Sciatic nerve (tissue), 2 donors: ENCODE measurements at regions of chr13 and their contacts with region 1.

Region 1: DNA sequence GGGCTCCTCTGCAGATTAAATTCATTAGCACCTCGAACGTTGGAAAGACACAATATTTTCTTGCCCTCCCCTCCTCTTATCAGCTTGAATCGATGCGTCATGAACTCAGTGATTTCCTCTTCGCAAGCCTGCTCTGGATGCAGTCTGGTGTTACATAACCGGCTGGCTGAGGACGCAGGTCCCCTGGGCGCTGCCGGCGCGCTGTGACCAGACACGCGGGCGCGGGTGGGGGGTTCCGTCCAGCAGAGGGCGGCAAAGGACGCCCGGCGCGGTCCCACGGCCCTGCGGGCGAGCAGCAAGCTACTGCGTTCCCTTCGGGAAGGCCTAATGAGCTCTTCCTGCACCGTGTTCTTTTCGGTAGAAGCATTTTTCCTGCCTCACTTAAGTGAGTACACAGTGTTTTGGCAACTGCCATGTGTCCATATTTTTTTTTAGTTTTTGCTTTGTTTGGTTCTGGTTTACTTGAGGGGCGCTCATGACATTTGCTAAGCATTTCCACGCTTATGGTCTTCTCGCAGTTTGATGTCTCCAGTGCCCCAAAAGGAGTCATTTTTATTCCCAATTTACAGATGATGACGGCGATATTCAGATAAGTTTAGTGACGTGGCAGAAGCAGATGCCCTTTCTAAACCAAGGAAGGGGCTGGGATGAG is 112.2 kb upstream of the MBNL2 start:
- DNase-seq: peak; percentile 95
- ATAC-seq: peak; percentile 96

Region 2: DNA sequence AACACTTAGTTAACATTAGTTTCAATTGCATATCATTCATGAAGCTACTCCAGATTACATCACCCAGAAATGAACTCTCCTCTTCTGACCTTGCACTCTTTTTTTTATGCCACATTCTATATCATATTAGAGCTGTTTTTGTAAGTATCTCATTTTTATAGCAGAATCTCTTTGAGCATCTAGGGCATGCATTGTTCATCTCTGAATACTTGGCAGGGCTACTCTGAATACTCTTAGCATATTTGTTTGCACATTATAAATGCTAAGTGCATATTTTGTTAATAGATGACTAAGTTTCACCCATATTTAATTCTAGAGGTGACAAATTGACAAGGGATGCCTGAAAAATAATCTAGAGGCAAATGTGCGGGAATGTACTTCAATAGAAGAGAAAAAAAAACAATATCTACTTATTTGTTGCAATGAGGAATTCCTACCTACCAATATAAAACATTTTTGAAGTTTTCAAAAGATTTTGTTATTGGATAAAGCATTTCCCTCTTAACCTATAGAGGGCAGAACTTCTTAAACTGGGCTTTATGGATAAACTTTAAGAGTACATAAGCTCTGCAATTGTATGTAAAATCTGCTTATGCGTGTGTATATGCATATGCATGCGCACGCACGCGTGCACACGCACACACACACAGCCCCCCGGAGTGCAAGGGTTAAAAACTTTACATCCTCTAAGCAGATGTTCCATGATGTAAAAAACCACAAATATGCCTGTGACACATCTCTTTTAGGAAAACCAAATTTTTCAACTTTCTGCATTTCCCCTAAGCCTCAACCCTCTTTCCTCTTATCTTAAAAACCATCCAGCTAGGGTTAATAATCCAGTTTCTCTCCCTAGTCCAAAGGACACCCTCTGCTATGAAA is 42.7 kb before region 1 on chr13:
- intact Hi-C with region 1: no loop called
- DNase-seq: no peak
- ATAC-seq: no peak

Region 3: DNA sequence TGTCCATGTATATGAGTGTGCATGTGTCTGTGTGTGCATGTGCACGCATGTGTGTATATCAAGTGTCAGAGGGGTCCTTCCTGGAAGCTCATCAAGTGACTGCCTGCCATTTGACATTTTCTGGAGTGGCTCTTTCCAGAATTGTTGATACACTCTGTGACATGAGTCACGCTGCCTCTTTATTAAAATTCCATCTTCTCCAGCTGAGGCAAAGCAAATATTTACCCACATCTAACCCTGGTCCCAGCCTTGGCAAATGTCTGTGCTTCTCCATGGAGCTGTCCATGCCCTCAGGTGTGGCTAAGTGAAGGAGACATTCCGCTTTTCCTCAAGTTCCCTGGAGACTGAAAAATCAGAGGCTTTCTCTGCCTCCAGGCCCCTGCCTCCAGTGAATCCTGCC is 24.0 kb after region 1 on chr13:
- intact Hi-C with region 1: no loop called
- DNase-seq: no peak
- ATAC-seq: no peak

Region 4: GRCh38 chr13:97221989-97222700 is 112.2 kb after region 1 on chr13 and contains the start of gene MBNL2:
- intact Hi-C with region 1: loop called (anchors 2 kb)
- DNase-seq: peak; percentile 92
- ATAC-seq: peak; percentile 97
- total RNA-seq, gene MBNL2: 102 TPM

Region 5: GRCh38 chr13:97344265-97345175 is 234.6 kb after region 1 on chr13:
- intact Hi-C with region 1: loop called (anchors 10 kb)
- DNase-seq: peak; percentile 81
- ATAC-seq: peak; percentile 87

Region 6: GRCh38 chr13:97432917-97433726 is 323.2 kb after region 1 on chr13:
- intact Hi-C with region 1: loop called (anchors 10 kb)
- DNase-seq: peak; percentile 99
- ATAC-seq: peak; percentile 96